Brain microvascular endothelial cell (primary cell): ENCODE measurements at regions of chr1 and their contacts with region 1.

Region 1: DNA sequence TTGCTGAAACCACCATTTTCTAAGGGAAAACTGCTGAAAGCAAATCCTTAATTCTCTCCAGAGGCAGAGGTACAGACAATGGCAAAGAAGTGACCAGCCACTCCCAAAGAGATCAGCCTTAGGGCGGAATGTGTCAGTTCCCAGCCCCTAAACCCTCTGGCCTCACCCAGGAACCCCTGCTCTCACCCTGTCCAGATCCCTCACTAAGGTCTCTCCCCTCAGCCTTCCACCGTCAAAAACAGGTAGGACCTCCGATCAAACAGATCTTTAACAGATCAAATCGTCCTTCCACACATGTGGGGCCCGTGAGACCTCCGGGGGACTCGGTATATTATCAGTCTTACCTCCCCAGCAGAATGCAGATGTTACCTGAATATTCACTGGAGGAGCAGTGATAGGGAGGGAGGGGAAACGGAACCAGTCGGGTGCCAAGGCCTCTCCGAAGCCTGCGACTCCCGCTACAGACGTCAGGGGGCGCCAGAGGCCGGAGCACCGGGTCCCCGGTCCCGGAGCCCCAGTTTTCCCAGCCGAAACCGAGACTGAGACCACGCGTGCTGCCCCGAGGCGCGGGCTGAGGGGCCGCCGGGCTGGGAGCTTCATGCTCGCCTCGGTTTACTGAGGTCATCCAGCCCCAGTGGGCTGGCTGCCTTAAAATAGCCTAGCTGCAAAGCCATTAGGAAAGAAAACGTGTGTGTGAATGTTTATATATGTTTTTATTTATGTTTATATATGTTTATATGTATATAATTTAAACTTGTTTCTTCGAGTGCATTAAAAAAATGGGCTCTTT is 23.6 kb downstream of the GPA33 start:
- DNase-seq: peak; percentile 49
- H3K4me3 ChIP-seq: peak overlapping the region; percentile 37
- H3K27ac ChIP-seq: no peak overlapping the region
- H3K27me3 ChIP-seq: no peaks in the 10 kb centered on the region
- CTCF ChIP-seq: peak; percentile 95

Region 2: DNA sequence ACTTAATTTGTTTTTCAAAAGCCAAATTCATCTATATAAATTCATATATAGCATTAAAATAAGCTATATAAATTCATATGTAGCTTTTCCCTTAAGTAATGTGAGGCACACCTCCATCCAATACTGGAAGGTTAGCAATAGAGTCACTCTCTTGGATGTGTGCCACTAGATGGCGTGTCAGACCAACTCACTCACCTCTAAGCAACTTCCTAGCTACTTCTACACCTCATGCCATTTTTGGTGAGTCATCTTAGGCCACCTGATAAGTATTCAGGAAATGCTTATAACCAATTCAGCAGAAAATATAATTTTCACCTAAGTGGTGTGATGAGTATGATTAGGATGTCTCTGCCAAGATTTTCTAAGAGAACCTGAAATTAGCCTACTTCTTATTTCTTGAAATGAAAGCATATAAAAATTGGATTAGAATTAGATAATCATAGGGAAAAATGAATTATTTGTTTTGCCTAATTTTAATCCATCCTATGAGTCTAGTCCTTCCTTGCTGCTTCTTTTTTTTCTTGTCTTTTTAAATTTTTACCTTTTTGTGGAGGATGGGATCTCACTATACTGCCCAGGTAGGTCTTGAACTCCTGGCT is 156.0 kb before region 1 on chr1:
- in situ Hi-C with region 1: loop called (anchors 10 kb)
- DNase-seq: peak; percentile 83
- H3K4me3 ChIP-seq: no peak overlapping the region
- H3K27ac ChIP-seq: no peak overlapping the region
- H3K27me3 ChIP-seq: no peaks in the 10 kb centered on the region
- CTCF ChIP-seq: peak; percentile 82